ENCODE measurements at regions of chr20 and their contacts with region 1.

Region 1: DNA sequence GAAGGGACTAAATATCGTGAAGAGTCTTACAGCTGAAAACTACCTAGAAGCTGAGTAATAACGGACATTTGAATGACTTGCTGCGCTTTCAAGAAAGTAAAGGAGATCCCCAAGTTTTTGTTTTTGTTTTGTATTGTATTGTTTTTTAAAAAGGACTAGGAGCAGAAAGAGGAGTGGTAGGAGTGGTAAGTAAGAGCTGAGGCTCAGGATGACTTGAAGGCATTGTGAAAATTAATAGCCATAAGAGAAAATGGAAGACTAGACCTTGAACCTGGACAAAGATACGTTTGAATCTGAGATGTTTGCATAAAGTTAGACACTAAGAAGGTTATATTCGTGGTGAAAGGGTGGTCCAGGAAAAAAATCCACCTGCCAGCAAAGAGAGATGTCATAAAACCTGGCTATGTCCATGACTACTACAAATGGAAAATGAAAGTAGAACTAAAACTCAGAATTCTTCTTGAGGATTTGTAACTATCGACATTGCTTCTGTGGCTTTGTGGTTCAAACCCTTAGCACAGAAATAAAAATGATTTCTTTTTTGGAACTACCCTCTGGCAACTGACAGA is 824.8 kb upstream of the FLRT3 start:
- DNase-seq: no peak
- H3K4me3 ChIP-seq: peak overlapping the region; percentile 10 to 45 (median 12)
- H3K27ac ChIP-seq: no peak overlapping the region
- H3K4me1 ChIP-seq: no peaks in the 10 kb centered on the region
- H3K27me3 ChIP-seq: no peaks in the 10 kb centered on the region
- CTCF ChIP-seq: no peak
- POLR2A ChIP-seq: no peak

Region 2: DNA sequence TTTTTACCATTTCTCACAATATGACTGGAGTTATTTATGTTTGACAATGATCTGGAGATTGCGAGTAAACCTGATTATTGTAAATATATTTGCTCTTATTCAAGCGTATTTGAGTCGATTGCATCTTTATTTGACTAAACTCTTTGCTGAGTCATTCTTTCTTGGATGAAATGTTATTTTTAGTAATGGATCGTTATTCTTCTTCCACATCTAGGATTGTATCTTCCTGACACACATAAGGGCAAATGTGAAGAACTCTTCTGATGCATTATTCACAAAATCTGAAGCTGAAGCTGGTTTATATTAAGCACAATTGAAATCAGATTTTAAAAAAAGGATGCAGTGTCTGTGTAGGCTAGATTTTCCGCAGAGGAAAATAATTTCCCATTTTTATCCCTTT is 1239.9 kb before region 1 on chr20:
- intact Hi-C with region 1: loop called (anchors 10 kb)
- DNase-seq: no peak
- H3K4me3 ChIP-seq: no peak overlapping the region
- H3K27ac ChIP-seq: no peak overlapping the region
- H3K4me1 ChIP-seq: no peaks in the 10 kb centered on the region
- H3K27me3 ChIP-seq: no peaks in the 10 kb centered on the region
- CTCF ChIP-seq: no peak
- POLR2A ChIP-seq: no peak

Region 3: DNA sequence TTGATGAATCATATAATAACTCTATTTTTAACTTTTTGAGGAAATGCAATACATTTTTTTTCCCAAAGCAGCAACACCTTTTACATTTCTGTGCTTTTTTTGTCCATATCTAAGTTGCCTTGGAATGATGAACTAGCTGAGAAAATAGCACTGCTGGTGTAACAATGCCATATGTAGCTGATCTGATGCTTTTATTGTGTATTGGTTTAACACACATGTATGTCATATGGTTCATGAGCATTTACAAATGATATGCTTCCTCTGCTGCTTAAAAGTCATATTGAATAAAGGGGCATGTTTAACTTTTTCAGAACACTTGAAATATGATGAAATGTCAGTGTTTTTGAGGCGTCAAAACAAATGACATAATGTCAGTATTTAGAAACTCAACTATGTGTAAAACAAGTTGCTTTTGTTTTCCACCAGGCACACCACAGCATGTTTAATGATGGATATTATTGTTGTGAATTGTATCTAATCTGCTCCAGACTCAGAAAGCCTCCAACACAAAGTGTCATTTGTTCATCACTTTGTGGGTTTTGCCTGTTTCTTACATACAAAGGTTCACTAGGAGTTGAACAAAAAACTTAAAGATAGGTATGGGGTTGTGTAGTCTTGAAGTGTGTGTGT is 48.9 kb before region 1 on chr20:
- intact Hi-C with region 1: no loop called
- DNase-seq: no peak
- H3K4me3 ChIP-seq: no peak overlapping the region
- H3K27ac ChIP-seq: no peak overlapping the region
- H3K4me1 ChIP-seq: no peaks in the 10 kb centered on the region
- H3K27me3 ChIP-seq: no peaks in the 10 kb centered on the region
- CTCF ChIP-seq: no peak
- POLR2A ChIP-seq: no peak

Measured in breast epithelium (tissue), 4 donors.